Head of caudate nucleus (tissue), 42 donors: ENCODE measurements at regions of chr21 and their contacts with region 1.

Region 1: GRCh38 chr21:39511131-39511530 is 59.4 kb downstream of the SH3BGR start:
- DNase-seq: peak in 1 of 42 donors; percentile 20

Region 2: DNA sequence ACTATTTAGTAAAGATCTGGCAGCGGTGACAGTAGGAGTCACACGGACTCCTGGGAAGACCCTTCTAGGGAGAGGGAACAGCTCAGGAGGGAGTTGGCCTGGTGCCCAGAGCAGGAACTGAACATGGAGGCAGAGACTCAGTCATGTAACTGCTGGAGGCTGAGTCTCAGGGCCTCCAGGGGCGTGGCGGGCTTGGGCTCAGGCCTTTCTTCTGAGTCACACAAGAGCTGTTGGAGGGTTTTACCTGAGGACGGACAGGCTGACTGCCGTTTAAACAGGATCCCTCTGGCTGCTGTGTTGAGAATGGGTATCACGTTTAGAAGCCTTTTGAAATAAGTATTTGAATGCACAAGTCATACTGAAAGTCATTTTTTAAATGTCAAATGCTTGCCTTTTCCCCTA is 712.6 kb before region 1 on chr21:
- intact Hi-C with region 1: no loop called
- DNase-seq: no peak

Region 3: GRCh38 chr21:39445321-39446269 is 65.5 kb before region 1 on chr21 and contains the start of gene LCA5L:
- intact Hi-C with region 1: loop called (anchors 5 kb)
- DNase-seq: peak; percentile 62 to 94 (median 86)

Region 4: GRCh38 chr21:39456665-39457064 is 54.5 kb before region 1 on chr21:
- intact Hi-C with region 1: no loop called
- DNase-seq: no peak

Region 5: GRCh38 chr21:39647476-39647875 is 136.3 kb after region 1 on chr21:
- intact Hi-C with region 1: no loop called
- DNase-seq: peak in 2 of 42 donors; percentile 14 to 22